Aorta (tissue), 5 donors: ENCODE measurements at regions of chr1 and their contacts with region 1.

Region 1: GRCh38 chr1:90262791-90263190 is 267.9 kb downstream of the ZNF326 start:
- DNase-seq: no peak
- ATAC-seq: peak; percentile 85
- H3K4me3 ChIP-seq: no peak overlapping the region
- H3K27ac ChIP-seq: no peak overlapping the region
- H3K4me1 ChIP-seq: peaks cover 0 to 10% of the 10 kb centered on the region in 2 donors
- H3K27me3 ChIP-seq: no peaks in the 10 kb centered on the region

Region 2: DNA sequence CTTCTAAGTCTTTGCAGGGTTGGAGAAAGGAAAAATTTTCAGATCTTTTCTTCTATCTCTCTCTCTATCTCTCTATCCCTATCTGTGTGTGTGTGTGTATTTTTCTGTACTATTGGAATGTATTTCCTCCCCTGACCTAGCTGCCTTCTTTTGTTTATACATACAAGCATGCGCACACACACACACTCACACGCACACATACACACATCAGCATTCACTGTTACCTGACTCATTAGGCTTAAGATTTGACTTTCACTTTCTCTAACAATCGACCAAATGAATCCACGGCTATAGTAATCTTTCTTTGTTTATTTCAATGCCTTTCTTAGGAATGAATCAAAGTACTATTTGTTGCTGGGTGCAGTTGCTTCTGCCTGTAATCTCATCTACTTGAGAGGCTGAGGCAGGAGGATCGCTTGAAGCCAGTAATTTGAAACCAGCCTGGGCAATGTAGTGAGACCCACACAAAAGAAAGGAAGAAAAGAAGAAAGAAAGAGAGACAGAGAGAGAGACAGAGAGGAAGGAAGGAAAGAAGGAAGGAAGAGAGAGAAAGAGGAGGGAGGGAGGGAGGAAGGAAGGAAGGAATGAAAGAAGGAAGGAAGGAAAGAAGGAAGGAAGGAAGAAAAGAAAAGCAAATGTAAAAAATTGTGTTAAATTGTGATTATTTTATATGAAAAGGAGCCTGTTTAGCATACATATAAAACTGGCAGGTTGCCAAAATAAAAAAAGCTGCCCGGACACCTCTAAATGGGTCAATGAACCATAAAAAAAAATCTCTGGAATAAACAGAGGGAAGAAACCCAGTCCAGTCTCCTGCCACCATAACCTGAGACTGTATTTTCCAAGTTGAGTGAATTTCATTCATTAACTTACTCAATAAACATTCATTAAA is 61.1 kb before region 1 on chr1:
- intact Hi-C with region 1: no loop called
- DNase-seq: no peak
- ATAC-seq: no peak
- H3K4me3 ChIP-seq: no peak overlapping the region
- H3K27ac ChIP-seq: no peak overlapping the region
- H3K4me1 ChIP-seq: no peaks in the 10 kb centered on the region
- H3K27me3 ChIP-seq: no peaks in the 10 kb centered on the region

Region 3: DNA sequence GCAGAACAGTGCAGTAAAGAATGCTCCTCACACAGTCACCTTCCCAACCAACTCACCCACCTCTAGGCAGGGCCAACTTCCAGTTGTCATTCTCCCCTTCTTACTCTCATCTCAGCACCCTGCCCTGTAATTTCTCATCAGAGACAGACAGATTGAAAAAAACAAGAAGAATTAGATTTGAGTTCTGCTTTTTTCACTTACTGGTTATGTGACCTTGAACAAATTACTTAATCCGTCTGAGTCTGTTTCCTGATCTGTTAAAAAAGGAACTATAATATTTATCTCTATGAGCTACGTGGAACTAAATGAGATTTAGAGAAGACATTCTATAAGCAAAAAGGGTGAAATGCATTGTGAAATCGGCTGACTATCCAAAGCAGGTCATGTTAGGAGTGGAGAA is 62.4 kb after region 1 on chr1:
- intact Hi-C with region 1: no loop called
- DNase-seq: no peak
- ATAC-seq: no peak
- H3K4me3 ChIP-seq: no peak overlapping the region
- H3K27ac ChIP-seq: no peak overlapping the region
- H3K4me1 ChIP-seq: no peaks in the 10 kb centered on the region
- H3K27me3 ChIP-seq: peaks cover 0 to 1% of the 10 kb centered on the region in 2 donors

Region 4: GRCh38 chr1:90370686-90371447 is 108.1 kb after region 1 on chr1:
- intact Hi-C with region 1: loop called (anchors 5 kb)
- DNase-seq: no peak
- ATAC-seq: no peak
- H3K4me3 ChIP-seq: no peak overlapping the region
- H3K27ac ChIP-seq: peak overlapping the region in 1 of 2 donors; percentile 63
- H3K4me1 ChIP-seq: peaks cover 0 to 5% of the 10 kb centered on the region in 2 donors
- H3K27me3 ChIP-seq: no peaks in the 10 kb centered on the region

Region 5: DNA sequence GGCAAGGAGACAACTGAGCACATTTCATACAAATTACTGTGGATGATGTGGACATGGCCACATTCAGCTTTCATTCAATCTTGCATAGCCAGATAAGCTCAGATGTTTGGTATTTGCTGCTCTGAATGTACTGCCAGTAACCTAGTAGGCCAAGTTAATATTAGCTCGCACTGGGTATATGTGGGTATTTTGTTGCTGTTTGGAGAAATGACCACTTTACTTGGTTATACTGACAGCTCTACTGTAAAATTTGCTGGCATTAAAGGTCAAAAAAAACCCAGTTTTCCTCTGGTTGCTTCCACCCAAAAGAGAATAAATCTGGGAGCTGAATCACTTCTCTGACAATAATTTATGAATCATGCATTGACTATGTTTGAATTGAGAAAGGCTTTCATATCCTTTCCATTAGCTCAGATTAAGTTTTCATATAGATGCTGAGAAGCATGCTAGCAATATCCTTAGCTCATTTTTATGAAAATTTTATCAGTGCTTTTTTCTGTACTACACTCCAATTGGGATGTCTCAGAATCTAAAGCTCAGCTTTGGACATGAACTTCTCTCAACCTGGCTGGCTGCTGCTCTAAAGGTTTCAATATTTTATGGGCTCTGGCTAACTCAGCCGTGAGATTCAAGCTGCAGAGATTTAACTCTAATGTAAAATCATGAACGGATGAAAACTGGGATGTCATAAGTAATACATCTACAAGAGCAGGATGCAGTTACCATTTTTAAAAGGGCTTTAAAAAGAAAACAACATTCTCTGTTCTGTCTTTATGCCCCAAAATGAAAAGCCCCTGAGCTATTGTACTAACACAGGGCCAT is 124.3 kb after region 1 on chr1:
- intact Hi-C with region 1: loop called in 1 of 2 experiments (anchors 5 kb)
- DNase-seq: no peak
- ATAC-seq: peak; percentile 71
- H3K4me3 ChIP-seq: no peak overlapping the region
- H3K27ac ChIP-seq: peak overlapping the region; percentile 57 to 89
- H3K4me1 ChIP-seq: peaks cover 2 to 4% of the 10 kb centered on the region in 2 donors
- H3K27me3 ChIP-seq: no peaks in the 10 kb centered on the region

Region 6: GRCh38 chr1:90457985-90458384 is 195.2 kb after region 1 on chr1:
- intact Hi-C with region 1: no loop called
- DNase-seq: no peak
- ATAC-seq: no peak
- H3K4me3 ChIP-seq: no peak overlapping the region
- H3K27ac ChIP-seq: no peak overlapping the region
- H3K4me1 ChIP-seq: no peaks in the 10 kb centered on the region
- H3K27me3 ChIP-seq: no peaks in the 10 kb centered on the region

Region 7: DNA sequence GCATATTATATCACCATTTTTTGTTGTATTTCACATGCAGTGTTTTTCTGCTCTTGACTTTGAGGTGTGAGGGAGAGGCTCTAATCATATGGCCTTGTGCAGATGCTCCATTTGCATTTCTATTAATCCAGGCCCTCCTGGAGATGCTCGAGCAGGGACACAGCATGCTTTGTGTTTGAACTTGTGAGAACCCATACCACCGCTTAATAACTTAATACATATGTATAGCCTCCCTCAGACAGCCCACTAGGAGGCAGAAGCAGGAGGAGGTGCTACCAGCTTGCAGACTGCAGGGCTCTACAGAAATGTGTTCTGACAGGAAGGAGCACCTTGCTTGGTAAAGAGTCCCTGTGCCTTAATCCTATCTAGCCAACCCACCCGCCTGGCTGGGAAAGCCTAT is 299.1 kb after region 1 on chr1:
- intact Hi-C with region 1: loop called in 1 of 2 experiments (anchors 5 kb)
- DNase-seq: no peak
- ATAC-seq: no peak
- H3K4me3 ChIP-seq: no peak overlapping the region
- H3K27ac ChIP-seq: no peak overlapping the region
- H3K4me1 ChIP-seq: peaks cover 2 to 6% of the 10 kb centered on the region in 2 donors
- H3K27me3 ChIP-seq: no peaks in the 10 kb centered on the region

Region 8: DNA sequence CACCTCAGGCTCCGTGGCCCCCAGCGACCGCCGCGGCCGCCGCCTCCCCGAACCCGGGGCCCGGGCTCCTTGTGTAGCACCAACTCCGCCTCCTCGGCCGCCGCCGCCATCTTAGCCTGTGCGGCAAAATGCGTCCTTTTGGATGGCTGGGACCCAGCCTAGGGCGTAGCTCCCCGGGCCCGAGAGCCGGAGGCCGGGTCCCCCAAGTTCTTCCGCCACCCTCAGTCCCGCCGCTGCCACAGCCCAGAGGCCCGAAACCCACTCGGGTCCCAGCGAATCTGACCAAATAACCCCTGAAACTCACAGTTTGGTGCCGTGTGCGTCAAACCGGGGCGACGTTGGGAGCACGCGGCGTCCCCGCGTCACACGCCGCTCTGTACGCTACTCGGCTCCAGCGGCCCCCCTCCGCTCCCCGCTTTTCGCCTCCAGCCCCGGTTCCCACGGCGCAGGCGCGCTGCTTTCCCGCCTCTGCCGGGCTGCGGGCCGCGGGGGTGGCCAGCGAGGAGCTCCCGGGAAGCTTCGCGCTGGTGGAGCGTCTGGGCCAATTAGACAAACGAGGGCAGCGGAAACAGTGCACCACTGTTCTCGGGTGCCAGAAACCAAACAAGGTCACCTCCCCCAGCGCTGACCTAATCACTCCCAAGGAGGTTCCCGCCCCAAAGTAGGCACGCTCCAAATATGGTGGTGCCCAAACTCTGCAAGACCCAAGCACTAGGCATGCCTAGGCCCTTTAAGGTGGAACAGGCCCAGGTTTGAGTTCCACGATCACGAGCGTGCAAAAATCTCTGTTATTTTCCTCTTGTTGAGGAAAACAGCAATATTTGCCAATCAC is 759.1 kb after region 1 on chr1 and contains the start of gene ZNF644:
- intact Hi-C with region 1: loop called in 1 of 2 experiments (anchors 5 kb)
- DNase-seq: peak; percentile 95
- ATAC-seq: peak; percentile 97
- H3K4me3 ChIP-seq: peak within 1 kb of the TSS; percentile 84
- H3K27ac ChIP-seq: peak within 1 kb of the TSS; percentile 92 to 94
- H3K4me1 ChIP-seq: peaks cover 0 to 3% of the 10 kb centered on the region in 2 donors
- H3K27me3 ChIP-seq: no peaks in the 10 kb centered on the region
- total RNA-seq, gene ZNF644: 63.2 to 82.3 TPM